ENCODE measurements at regions of chr9 and their contacts with region 1.

Region 1: GRCh38 chr9:97598461-97599288 is 34.5 kb downstream of the TSTD2 start:
- DNase-seq: no peak
- H3K4me3 ChIP-seq: no peak overlapping the region
- H3K27ac ChIP-seq: peak overlapping the region; percentile 66
- H3K4me1 ChIP-seq: peaks cover 20% of the 10 kb centered on the region
- H3K27me3 ChIP-seq: no peaks in the 10 kb centered on the region
- CTCF ChIP-seq: peak; percentile 52 to 71 (median 58)
- POLR2A ChIP-seq: no peak

Region 2: DNA sequence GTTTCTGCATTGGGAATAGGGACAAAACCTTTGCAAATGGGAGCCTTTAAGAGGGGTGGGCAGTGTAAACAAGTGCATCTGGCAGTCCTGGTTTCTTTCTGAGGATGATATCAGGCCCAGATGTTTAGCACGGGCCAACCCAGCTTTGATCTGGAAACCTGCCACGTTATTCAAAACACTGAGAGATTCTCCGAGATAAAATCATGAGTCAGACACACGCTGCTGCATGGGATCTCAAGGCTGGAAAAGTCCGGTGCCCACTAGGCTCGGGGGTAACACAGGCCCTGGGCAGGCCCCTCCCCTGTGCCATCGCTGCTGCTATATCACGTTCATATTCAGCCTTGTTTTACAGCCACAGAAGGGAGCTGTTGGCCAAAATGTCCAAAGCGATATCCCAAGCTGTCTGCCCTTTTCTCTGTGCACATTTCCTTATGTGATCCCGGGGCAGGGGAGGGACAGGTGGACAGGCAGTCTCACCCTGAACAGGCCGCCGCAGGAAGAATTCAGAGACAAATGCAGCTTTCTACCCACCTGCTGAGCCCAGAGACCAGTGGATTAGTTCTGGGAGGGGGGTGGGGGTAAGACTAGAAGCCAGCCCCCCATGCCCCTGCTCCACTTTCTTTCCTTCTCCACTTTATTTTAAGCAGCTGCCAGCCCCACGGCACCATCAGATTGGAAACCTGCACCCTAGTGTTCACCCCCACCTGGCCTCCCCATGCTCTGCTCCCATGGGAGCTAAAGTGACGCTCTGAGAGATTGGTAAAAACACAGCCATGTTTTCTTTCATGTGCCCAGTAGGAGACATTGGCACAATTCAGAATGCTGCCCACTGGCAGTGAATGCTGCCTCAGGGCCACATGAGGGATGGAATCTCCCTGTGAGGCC is 34.1 kb before region 1 on chr9:
- intact Hi-C with region 1: loop called (anchors 5 kb)
- DNase-seq: peak in 1 of 2 donors; percentile 83
- H3K4me3 ChIP-seq: no peak overlapping the region
- H3K27ac ChIP-seq: peak overlapping the region; percentile 88
- H3K4me1 ChIP-seq: peaks cover 37% of the 10 kb centered on the region
- H3K27me3 ChIP-seq: no peaks in the 10 kb centered on the region
- CTCF ChIP-seq: no peak
- POLR2A ChIP-seq: no peak